Breast epithelium (tissue), 4 donors: ENCODE measurements at regions of chr20 and their contacts with region 1.

Region 1: DNA sequence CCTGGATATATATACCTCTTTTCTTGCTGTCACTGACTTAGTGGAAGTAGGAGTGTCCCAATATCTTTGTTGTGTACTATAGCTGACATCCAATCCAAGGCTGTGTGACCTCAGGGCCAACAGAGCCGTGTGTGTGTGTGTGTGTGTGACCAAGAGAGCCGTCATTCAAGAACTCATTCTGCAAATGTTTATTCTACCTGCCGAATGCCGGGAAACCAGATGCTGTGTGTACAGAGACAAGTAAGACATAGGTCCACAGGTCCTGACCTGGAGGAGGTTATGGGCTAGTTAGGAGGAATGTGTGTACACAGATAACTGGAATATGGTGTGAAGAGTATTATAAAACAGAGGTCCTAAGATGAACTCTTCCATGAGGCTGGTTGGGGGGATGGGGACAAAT is 190.0 kb downstream of the DHX35 start:
- DNase-seq: peak; percentile 43 to 64
- H3K4me3 ChIP-seq: no peak overlapping the region
- H3K27ac ChIP-seq: no peak overlapping the region
- H3K4me1 ChIP-seq: no peaks in the 10 kb centered on the region
- H3K27me3 ChIP-seq: no peaks in the 10 kb centered on the region
- CTCF ChIP-seq: no peak
- POLR2A ChIP-seq: no peak

Region 2: DNA sequence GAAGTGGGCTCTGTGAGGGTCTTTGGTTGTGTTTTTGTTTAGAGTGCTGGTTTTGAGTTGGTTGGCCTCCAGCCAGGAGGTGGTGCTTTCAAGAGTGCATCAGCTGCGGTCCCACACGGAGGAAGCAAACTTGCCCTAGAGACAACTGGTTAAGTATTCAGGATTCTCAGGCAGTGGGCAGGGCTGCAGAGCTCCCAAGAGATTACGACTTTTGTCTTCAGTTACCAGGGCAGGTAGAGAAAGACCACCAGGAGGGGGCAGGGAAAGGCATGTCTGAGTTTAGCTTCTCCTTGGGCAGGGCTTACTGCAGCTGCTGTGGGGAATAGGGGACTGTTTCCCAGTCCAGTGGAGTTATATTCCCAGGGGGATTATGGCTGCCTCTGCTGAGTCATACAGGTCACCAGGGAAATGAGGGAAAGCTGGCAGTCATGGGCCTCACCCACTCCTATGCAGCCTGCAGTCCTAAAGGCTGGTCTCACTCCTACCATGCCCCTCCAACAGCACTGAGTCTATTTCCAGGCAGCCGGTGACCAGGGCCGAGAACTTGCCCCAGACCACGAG is 1183.2 kb before region 1 on chr20:
- intact Hi-C with region 1: no loop called
- DNase-seq: no peak
- H3K4me3 ChIP-seq: no peak overlapping the region
- H3K27ac ChIP-seq: no peak overlapping the region
- H3K4me1 ChIP-seq: no peaks in the 10 kb centered on the region
- H3K27me3 ChIP-seq: no peaks in the 10 kb centered on the region
- CTCF ChIP-seq: no peak
- POLR2A ChIP-seq: no peak

Region 3: GRCh38 chr20:39206899-39207564 is 54.9 kb after region 1 on chr20:
- intact Hi-C with region 1: no loop called
- DNase-seq: peak in 1 of 2 donors; percentile 32
- H3K4me3 ChIP-seq: no peak overlapping the region
- H3K27ac ChIP-seq: no peak overlapping the region
- H3K4me1 ChIP-seq: no peaks in the 10 kb centered on the region
- H3K27me3 ChIP-seq: no peaks in the 10 kb centered on the region
- CTCF ChIP-seq: no peak
- POLR2A ChIP-seq: no peak

Region 4: DNA sequence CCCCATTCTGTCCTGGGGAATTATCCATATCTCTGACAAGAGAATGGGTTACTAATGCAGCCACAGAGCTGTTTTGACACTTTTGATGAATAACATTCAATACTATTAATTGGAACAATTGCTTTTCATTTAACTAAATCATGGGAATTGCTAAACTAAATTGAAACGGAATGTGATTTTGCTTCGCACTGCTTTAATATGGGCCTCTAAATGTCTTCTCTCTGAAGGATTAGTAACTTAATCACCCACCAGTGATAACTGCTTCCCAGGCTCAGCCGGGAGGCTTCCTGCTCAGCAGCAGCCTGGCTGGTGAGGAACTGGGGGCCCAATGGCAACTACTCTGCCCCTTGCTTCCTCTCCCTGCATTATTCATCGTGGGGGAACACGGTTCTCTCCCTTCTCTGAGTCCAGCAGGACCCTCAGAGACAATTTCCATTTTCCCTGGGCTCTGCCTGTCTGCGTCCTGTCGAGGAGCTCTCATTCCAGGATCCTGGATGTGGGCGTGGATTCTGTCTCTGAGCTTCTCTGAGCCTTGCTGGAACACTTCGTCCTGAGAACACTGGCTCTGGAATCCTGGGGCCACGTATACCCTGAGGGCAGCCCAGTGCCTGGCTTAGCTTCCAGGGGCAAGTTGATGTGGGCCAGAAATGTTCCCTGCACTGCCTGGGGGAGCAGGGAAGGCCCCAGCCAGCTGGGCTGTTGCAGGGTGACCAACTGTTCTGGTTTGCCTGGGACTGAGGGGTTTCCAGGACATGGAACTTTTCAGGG is 118.9 kb after region 1 on chr20:
- intact Hi-C with region 1: no loop called
- DNase-seq: no peak
- H3K4me3 ChIP-seq: no peak overlapping the region
- H3K27ac ChIP-seq: peak overlapping the region in 1 of 2 donors; percentile 13
- H3K4me1 ChIP-seq: no peaks in the 10 kb centered on the region
- H3K27me3 ChIP-seq: no peaks in the 10 kb centered on the region
- CTCF ChIP-seq: no peak
- POLR2A ChIP-seq: no peak

Region 5: GRCh38 chr20:40547483-40548091 is 1395.5 kb after region 1 on chr20:
- intact Hi-C with region 1: loop called (anchors 5 kb)
- DNase-seq: no peak
- H3K4me3 ChIP-seq: no peak overlapping the region
- H3K27ac ChIP-seq: no peak overlapping the region
- H3K4me1 ChIP-seq: no peaks in the 10 kb centered on the region
- H3K27me3 ChIP-seq: no peaks in the 10 kb centered on the region
- CTCF ChIP-seq: no peak
- POLR2A ChIP-seq: no peak